OCI-LY7 (cell line): ENCODE measurements at regions of chr12 and their contacts with region 1.

Region 1: GRCh38 chr12:82400824-82401223 is 42.5 kb downstream of the METTL25 start:
- DNase-seq: no peak
- H3K4me3 ChIP-seq: no peak overlapping the region
- H3K27ac ChIP-seq: no peak overlapping the region
- H3K4me1 ChIP-seq: no peaks in the 10 kb centered on the region
- CTCF ChIP-seq: no peak

Region 2: GRCh38 chr12:82781309-82781997 is 380.6 kb after region 1 on chr12:
- CTCF ChIA-PET with region 1: no interaction called
- POLR2A ChIA-PET with region 1: interaction called, 12 read pairs
- intact Hi-C with region 1: no loop called
- DNase-seq: no peak
- H3K4me3 ChIP-seq: no peak overlapping the region
- H3K27ac ChIP-seq: no peak overlapping the region
- H3K4me1 ChIP-seq: no peaks in the 10 kb centered on the region
- CTCF ChIP-seq: no peak

Region 3: GRCh38 chr12:83121897-83122622 is 721.2 kb after region 1 on chr12:
- CTCF ChIA-PET with region 1: no interaction called
- POLR2A ChIA-PET with region 1: no interaction called
- intact Hi-C with region 1: no loop called
- DNase-seq: no peak
- H3K4me3 ChIP-seq: no peak overlapping the region
- H3K27ac ChIP-seq: no peak overlapping the region
- H3K4me1 ChIP-seq: no peaks in the 10 kb centered on the region
- CTCF ChIP-seq: no peak